Heart right ventricle (tissue), 16 donors: ENCODE measurements at regions of chr22 and their contacts with region 1.

Region 1: DNA sequence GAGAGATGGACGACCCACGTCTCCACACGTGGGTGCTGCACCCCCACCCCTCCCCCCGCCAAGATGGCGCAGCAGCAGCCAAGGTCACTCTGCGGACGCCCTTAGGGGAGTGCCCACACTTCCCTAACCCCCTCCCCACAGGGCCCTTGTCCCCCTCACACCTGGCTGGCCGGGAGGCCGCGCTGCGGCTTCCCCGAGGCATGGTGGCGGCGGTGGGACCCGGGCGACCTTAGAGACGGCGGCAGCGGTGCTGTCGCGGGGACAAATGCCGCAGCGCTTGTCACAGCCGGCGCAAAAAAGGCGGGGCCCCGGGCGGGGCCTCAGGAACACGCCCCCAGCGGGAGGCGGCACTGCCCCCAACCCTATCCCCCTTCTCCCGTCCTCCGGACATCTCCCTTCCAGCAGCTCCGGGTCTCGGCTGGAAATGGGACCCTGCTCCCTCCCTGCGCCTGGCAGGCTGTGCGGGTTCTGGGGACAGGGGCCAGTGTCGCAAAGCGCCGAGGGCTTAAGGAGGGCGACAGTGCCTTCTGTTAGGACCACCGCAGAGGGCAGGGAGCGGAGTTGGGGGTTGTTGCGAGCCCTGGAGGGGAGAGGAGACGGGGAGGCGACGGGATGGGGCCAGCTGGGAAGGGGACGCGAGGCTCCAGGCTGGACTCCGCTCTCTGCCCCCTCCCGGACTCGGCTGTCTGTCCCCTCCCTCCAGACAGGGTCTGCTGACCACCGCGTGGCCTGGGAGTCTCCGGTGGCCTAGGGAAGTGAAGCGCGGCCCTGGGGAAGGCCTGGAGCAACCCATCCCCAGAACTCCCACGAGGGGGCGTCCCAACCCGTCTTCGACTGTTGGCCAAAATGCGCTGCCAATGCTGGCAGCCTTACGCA is at the start of gene CHCHD10:
- DNase-seq: peak; percentile 89
- ATAC-seq: peak; percentile 81 to 92 (median 88)
- H3K4me3 ChIP-seq: peak within 1 kb of the TSS; percentile 58 to 78 (median 70)
- H3K27ac ChIP-seq: peak within 1 kb of the TSS; percentile 85 to 96 (median 92)
- H3K4me1 ChIP-seq: peaks cover 11 to 68% (median 55%) of the 10 kb centered on the region in 9 donors
- H3K27me3 ChIP-seq: peaks cover 0 to under 1% (median 0%) of the 10 kb centered on the region in 7 donors
- CTCF ChIP-seq: peak; percentile 75 to 91 (median 87)
- total RNA-seq, gene CHCHD10: 860 to 1,727 (median 1,056) TPM

Region 2: DNA sequence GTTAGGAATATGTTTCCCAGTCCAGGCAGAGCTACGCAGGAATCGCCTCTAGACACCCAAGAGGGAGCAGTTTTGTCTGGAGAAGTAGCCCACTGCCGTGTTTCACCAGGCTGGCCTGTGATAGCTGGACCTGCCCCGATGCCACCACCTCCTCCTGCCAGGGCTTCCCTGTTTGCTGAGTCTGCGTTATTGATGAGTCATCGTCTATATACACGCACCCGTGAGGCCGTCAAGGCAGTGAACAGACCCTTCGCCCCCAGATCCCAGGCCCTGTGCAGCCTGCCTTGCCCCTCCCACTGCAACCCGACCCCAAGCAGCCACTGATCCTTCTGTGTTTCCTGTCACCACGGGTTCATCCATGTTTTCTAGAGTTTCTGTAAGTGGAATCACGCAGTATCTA is 329.7 kb before region 1 on chr22:
- intact Hi-C with region 1: no loop called
- DNase-seq: no peak
- ATAC-seq: no peak
- H3K4me3 ChIP-seq: no peak overlapping the region
- H3K27ac ChIP-seq: no peak overlapping the region
- H3K4me1 ChIP-seq: peaks cover 0 to 5% (median under 1%) of the 10 kb centered on the region in 9 donors
- H3K27me3 ChIP-seq: peaks cover 0 to 7% (median 0%) of the 10 kb centered on the region in 7 donors
- CTCF ChIP-seq: no peak

Region 3: GRCh38 chr22:23622634-23623033 is 145.3 kb before region 1 on chr22:
- intact Hi-C with region 1: loop called in 1 of 10 experiments (anchors 10 kb)
- DNase-seq: no peak
- ATAC-seq: no peak
- H3K4me3 ChIP-seq: no peak overlapping the region
- H3K27ac ChIP-seq: no peak overlapping the region
- H3K4me1 ChIP-seq: no peaks in the 10 kb centered on the region
- H3K27me3 ChIP-seq: no peaks in the 10 kb centered on the region
- CTCF ChIP-seq: no peak

Region 4: GRCh38 chr22:23786752-23787599 is 19.1 kb after region 1 on chr22 and contains the start of gene SMARCB1:
- intact Hi-C with region 1: loop called in 1 of 10 experiments (anchors 2 kb)
- DNase-seq: peak; percentile 92 to 93
- ATAC-seq: peak; percentile 90 to 97 (median 95)
- H3K4me3 ChIP-seq: peak within 1 kb of the TSS; percentile 70 to 96 (median 88)
- H3K27ac ChIP-seq: peak within 1 kb of the TSS; percentile 98 to 100 (median 100)
- H3K4me1 ChIP-seq: peaks cover 14 to 59% (median 46%) of the 10 kb centered on the region in 9 donors
- H3K27me3 ChIP-seq: no peaks in the 10 kb centered on the region
- CTCF ChIP-seq: peak in 1 of 9 donors; percentile 8
- total RNA-seq, gene SMARCB1: 28.5 to 73.1 (median 39.8) TPM

Region 5: GRCh38 chr22:23826465-23827199 is 58.7 kb after region 1 on chr22:
- intact Hi-C with region 1: loop called in 1 of 10 experiments (anchors 5 kb)
- DNase-seq: no peak
- ATAC-seq: no peak
- H3K4me3 ChIP-seq: no peak overlapping the region
- H3K27ac ChIP-seq: peak overlapping the region in 9 of 10 donors; percentile 15 to 91 (median 70)
- H3K4me1 ChIP-seq: peaks cover 14 to 99% (median 73%) of the 10 kb centered on the region in 9 donors
- H3K27me3 ChIP-seq: no peaks in the 10 kb centered on the region
- CTCF ChIP-seq: no peak

Region 6: GRCh38 chr22:23849009-23850006 is 81.4 kb after region 1 on chr22:
- intact Hi-C with region 1: loop called (anchors 2 to 5 kb)
- DNase-seq: peak; percentile 81 to 89
- ATAC-seq: peak; percentile 49 to 67 (median 60)
- H3K4me3 ChIP-seq: peak overlapping the region in 3 of 10 donors; percentile 18 to 25 (median 23)
- H3K27ac ChIP-seq: no peak overlapping the region
- H3K4me1 ChIP-seq: peaks cover 18 to 52% (median 39%) of the 10 kb centered on the region in 9 donors
- H3K27me3 ChIP-seq: peaks cover 0 to 9% (median 0%) of the 10 kb centered on the region in 7 donors
- CTCF ChIP-seq: peak; percentile 97 to 99 (median 98)